ENCODE measurements at regions of chr15 and their contacts with region 1.

Region 1: DNA sequence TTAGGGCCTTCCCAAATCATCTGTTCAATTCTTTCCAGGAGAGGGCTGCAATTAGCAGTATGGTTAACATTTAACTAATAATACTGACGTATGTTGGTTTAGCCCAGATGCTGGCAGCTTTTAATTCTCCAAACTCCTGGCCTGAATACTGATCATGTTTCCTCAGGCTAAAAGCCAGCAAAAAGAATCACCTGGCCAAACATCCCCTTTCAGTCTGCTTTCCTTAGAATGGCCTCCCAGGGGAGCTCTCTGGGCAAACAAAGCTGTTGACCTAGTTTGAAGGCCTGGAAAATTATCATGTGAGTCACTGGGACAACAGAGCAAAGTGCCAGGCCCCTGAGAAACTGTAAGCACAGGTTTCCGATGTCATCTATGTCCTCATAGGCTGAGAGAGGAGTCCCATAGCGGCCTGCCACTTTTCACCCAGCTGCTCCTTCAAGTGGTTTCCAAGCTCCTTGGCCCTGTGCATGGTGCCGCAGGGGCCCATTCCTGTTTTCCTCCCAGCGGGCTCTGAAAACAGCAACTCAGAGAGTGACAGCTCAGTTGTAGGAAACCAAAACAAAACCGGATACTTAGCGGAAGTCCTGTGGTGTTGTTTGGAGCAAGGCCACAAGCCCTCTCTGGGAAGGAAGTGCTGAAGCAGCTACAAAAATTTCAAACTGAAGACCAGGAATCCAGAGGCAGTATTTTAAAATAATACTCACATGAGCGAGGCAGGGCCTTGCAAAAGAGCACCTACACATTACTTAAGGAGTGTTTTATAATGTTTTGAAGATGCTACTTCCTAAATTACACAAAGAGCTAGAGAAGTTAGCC is 36.5 kb upstream of the RAB11A start:
- DNase-seq: peak; percentile 93 to 94
- H3K4me3 ChIP-seq: no peak overlapping the region
- H3K4me3 Mint-ChIP-seq: peak overlapping the region; percentile 67
- H3K27ac Mint-ChIP-seq: peak overlapping the region; percentile 97
- H3K4me1 ChIP-seq: peaks cover 34% of the 10 kb centered on the region
- H3K4me1 Mint-ChIP-seq: peaks cover 34% of the 10 kb centered on the region
- H3K27me3 ChIP-seq: no peaks in the 10 kb centered on the region
- H3K27me3 Mint-ChIP-seq: no peaks in the 10 kb centered on the region
- CTCF ChIP-seq: peak; percentile 24 to 30

Region 2: GRCh38 chr15:65610871-65611718 is 221.7 kb before region 1 on chr15 and contains the start of gene INTS14:
- CTCF ChIA-PET with region 1: interaction called, 7 read pairs
- POLR2A ChIA-PET with region 1: interaction called, 16 read pairs
- intact Hi-C with region 1: no loop called
- DNase-seq: peak; percentile 96 to 98
- H3K4me3 ChIP-seq: peak within 1 kb of the TSS; percentile 63
- H3K4me3 Mint-ChIP-seq: peak within 1 kb of the TSS; percentile 97
- H3K27ac Mint-ChIP-seq: peak within 1 kb of the TSS; percentile 99
- H3K4me1 ChIP-seq: peaks cover 9% of the 10 kb centered on the region
- H3K4me1 Mint-ChIP-seq: peaks cover 7% of the 10 kb centered on the region
- H3K27me3 ChIP-seq: no peaks in the 10 kb centered on the region
- H3K27me3 Mint-ChIP-seq: no peaks in the 10 kb centered on the region
- CTCF ChIP-seq: peak; percentile 66 to 69
- total RNA-seq, gene INTS14: 37.7 and 38.2 TPM in 2 replicates

Region 3: GRCh38 chr15:65723876-65724275 is 108.9 kb before region 1 on chr15:
- CTCF ChIA-PET with region 1: no interaction called
- POLR2A ChIA-PET with region 1: no interaction called
- intact Hi-C with region 1: loop called (anchors 10 kb)
- DNase-seq: peak in 1 of 2 experiments; percentile 8
- H3K4me3 ChIP-seq: no peak overlapping the region
- H3K4me3 Mint-ChIP-seq: peak overlapping the region; percentile 33
- H3K27ac Mint-ChIP-seq: peak overlapping the region; percentile 63
- H3K4me1 ChIP-seq: peaks cover 29% of the 10 kb centered on the region
- H3K4me1 Mint-ChIP-seq: peaks cover 5% of the 10 kb centered on the region
- H3K27me3 ChIP-seq: no peaks in the 10 kb centered on the region
- H3K27me3 Mint-ChIP-seq: no peaks in the 10 kb centered on the region
- CTCF ChIP-seq: no peak

Region 4: DNA sequence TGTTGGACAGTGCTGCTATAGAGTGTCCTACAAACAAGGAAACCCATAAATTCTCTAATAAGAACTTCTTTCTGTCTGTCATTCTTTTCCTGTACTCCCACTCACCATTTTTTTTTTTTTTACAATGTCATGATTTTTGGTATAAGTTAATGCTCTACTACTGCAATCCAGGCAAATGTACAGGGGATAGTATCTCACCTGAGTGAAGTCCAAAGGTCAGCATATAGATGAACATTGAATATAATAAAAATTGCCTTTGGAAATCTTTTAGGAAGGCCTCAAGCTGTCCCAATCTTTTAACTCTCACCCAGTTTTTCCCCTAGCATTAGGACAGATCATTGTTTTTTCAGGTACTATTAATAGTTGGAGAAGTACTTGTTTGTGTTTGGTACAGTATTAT is 15.2 kb after region 1 on chr15:
- CTCF ChIA-PET with region 1: no interaction called
- POLR2A ChIA-PET with region 1: no interaction called
- intact Hi-C with region 1: loop called (anchors 2 kb)
- DNase-seq: no peak
- H3K4me3 ChIP-seq: no peak overlapping the region
- H3K4me3 Mint-ChIP-seq: no peak overlapping the region
- H3K27ac Mint-ChIP-seq: no peak overlapping the region
- H3K4me1 ChIP-seq: no peaks in the 10 kb centered on the region
- H3K4me1 Mint-ChIP-seq: no peaks in the 10 kb centered on the region
- H3K27me3 ChIP-seq: no peaks in the 10 kb centered on the region
- H3K27me3 Mint-ChIP-seq: no peaks in the 10 kb centered on the region
- CTCF ChIP-seq: no peak

Region 5: DNA sequence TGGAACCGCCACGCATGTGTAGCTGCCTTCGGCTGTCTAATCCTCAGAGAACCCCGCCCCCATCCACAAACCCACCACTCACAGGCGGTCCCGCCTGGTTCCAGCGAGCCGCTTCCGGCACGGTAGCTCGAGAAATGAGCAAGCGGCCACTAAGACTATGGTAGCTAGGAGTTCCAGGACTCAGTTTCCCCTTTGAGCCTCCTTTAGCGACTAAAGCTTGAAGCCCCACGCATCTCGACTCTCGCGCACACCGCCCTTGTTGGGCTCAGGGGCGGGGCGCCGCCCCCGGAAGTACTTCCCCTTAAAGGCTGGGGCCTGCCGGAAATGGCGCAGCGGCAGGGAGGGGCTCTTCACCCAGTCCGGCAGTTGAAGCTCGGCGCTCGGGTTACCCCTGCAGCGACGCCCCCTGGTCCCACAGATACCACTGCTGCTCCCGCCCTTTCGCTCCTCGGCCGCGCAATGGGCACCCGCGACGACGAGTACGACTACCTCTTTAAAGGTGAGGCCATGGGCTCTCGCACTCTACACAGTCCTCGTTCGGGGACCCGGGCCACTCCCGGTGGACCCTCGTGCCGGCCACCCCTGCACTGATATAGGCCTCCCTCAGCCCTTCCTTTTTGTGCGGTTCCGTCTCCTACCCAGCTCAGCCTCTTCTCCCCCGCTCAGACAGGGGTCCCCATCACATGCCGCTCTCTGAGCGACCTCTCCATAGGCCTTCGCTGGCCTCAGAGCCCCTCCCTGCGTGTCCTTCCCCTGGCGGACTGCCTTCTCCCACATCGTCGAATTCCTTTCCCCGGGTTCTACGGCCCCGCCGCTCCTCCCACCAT is 36.6 kb after region 1 on chr15 and contains the start of gene RAB11A:
- CTCF ChIA-PET with region 1: interaction called, 10 read pairs
- POLR2A ChIA-PET with region 1: interaction called, 29 read pairs
- intact Hi-C with region 1: loop called (anchors 2 kb)
- DNase-seq: peak; percentile 94 to 96
- H3K4me3 ChIP-seq: peak within 1 kb of the TSS; percentile 96
- H3K4me3 Mint-ChIP-seq: peak within 1 kb of the TSS; percentile 98
- H3K27ac Mint-ChIP-seq: peak within 1 kb of the TSS; percentile 97
- H3K4me1 ChIP-seq: no peaks in the 10 kb centered on the region
- H3K4me1 Mint-ChIP-seq: peaks cover 10% of the 10 kb centered on the region
- H3K27me3 ChIP-seq: no peaks in the 10 kb centered on the region
- H3K27me3 Mint-ChIP-seq: peaks cover 3% of the 10 kb centered on the region
- CTCF ChIP-seq: peak in 1 of 2 experiments; percentile 47
- total RNA-seq, gene RAB11A: 208 and 232 TPM in 2 replicates

Region 6: DNA sequence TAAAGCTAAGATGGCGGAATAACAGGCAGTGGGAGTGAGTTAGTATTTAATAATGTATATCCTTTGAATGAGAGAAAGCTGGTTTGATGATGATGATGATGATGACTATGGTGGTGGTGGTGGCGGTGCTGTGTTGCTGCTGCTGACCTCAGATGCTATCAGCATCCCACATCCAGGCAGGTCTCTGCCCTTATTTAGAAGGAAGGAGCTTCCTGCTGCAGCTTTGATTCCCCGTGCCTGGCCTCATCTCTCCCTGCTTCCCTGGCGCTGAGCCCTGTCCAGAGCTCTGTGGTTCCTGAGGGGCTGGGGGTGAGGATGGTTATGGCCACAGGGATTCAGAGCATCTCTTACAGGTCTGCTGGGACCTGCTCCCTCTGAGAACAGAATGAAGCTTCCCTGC is 109.7 kb after region 1 on chr15:
- CTCF ChIA-PET with region 1: no interaction called
- POLR2A ChIA-PET with region 1: no interaction called
- intact Hi-C with region 1: no loop called
- DNase-seq: no peak
- H3K4me3 ChIP-seq: no peak overlapping the region
- H3K4me3 Mint-ChIP-seq: no peak overlapping the region
- H3K27ac Mint-ChIP-seq: no peak overlapping the region
- H3K4me1 ChIP-seq: no peaks in the 10 kb centered on the region
- H3K4me1 Mint-ChIP-seq: no peaks in the 10 kb centered on the region
- H3K27me3 ChIP-seq: no peaks in the 10 kb centered on the region
- H3K27me3 Mint-ChIP-seq: no peaks in the 10 kb centered on the region
- CTCF ChIP-seq: no peak

Measured in Caco-2 (cell line).